HAP-1 (cell line): ENCODE measurements at regions of chr6 and their contacts with region 1.

Region 1: GRCh38 chr6:26065952-26066380 is 21.3 kb upstream of the HFE start:
- DNase-seq: peak; percentile 74 to 83
- H3K4me3 ChIP-seq: no peak overlapping the region
- H3K4me1 ChIP-seq: peaks cover 7% of the 10 kb centered on the region
- H3K27me3 ChIP-seq: no peaks in the 10 kb centered on the region

Region 2: GRCh38 chr6:26103770-26104456 is 37.9 kb after region 1 on chr6:
- in situ Hi-C with region 1: loop called (anchors 5 kb)
- DNase-seq: peak; percentile 90 to 96
- H3K4me3 ChIP-seq: peak overlapping the region; percentile 36
- H3K4me1 ChIP-seq: peaks cover 21% of the 10 kb centered on the region
- H3K27me3 ChIP-seq: no peaks in the 10 kb centered on the region